HCT116 (cell line): ENCODE measurements at regions of chr5 and their contacts with region 1.

Region 1: DNA sequence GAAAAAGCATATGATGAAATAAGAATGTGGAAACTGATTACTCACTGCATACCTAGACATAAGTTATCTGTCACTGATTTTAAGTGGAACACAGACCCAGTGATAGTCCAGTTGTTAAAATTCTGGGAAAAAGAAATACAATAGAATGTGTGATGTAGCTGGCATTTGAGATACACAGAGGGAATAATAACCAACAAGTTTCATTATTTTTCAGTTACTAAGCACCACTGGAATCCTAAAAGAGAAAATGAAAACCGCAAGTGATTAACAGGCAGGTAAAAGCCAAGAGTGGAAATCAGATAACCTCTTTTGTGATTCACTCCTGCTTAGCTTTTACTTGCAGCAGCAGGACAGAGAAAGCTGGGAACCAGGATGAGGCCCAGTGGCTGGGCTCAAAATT is 994.0 kb upstream of the SEMA6A start:
- DNase-seq: no peak
- ATAC-seq: no peak
- H3K4me3 ChIP-seq: no peak overlapping the region
- H3K27ac ChIP-seq: no peak overlapping the region
- H3K4me1 ChIP-seq: no peaks in the 10 kb centered on the region
- H3K27me3 ChIP-seq: no peaks in the 10 kb centered on the region
- CTCF ChIP-seq: no peak
- POLR2A ChIP-seq: no peak
- RAD21 ChIP-seq: no peak

Region 2: GRCh38 chr5:116574367-116575325 is 994.0 kb before region 1 on chr5 and contains the start of gene SEMA6A:
- CTCF ChIA-PET with region 1: no interaction called
- POLR2A ChIA-PET with region 1: no interaction called
- RAD21 ChIA-PET with region 1: no interaction called
- intact Hi-C with region 1: loop called (anchors 10 kb)
- DNase-seq: peak; percentile 95
- ATAC-seq: peak; percentile 87
- H3K4me3 ChIP-seq: peak within 1 kb of the TSS; percentile 59 to 70
- H3K27ac ChIP-seq: peak within 1 kb of the TSS; percentile 40
- H3K4me1 ChIP-seq: peaks cover 8 to 21% of the 10 kb centered on the region in 2 experiments; a peak in 3 of 4 replicates
- H3K27me3 ChIP-seq: no peaks in the 10 kb centered on the region
- CTCF ChIP-seq: no peak
- POLR2A ChIP-seq: peak; percentile 48
- RAD21 ChIP-seq: peak; percentile 44
- total RNA-seq, gene SEMA6A: 6.7 TPM

Region 3: GRCh38 chr5:117587111-117587510 is 18.5 kb after region 1 on chr5:
- CTCF ChIA-PET with region 1: no interaction called
- POLR2A ChIA-PET with region 1: no interaction called
- RAD21 ChIA-PET with region 1: no interaction called
- intact Hi-C with region 1: no loop called
- DNase-seq: no peak
- ATAC-seq: no peak
- H3K4me3 ChIP-seq: no peak overlapping the region
- H3K27ac ChIP-seq: no peak overlapping the region
- H3K4me1 ChIP-seq: no peaks in the 10 kb centered on the region
- H3K27me3 ChIP-seq: no peaks in the 10 kb centered on the region
- CTCF ChIP-seq: no peak
- POLR2A ChIP-seq: no peak
- RAD21 ChIP-seq: no peak

Region 4: GRCh38 chr5:117792476-117792875 is 223.9 kb after region 1 on chr5:
- CTCF ChIA-PET with region 1: no interaction called
- POLR2A ChIA-PET with region 1: no interaction called
- RAD21 ChIA-PET with region 1: no interaction called
- intact Hi-C with region 1: no loop called
- DNase-seq: no peak
- ATAC-seq: no peak
- H3K4me3 ChIP-seq: no peak overlapping the region
- H3K27ac ChIP-seq: no peak overlapping the region
- H3K4me1 ChIP-seq: no peaks in the 10 kb centered on the region
- H3K27me3 ChIP-seq: no peaks in the 10 kb centered on the region
- CTCF ChIP-seq: no peak
- POLR2A ChIP-seq: no peak
- RAD21 ChIP-seq: no peak

Region 5: DNA sequence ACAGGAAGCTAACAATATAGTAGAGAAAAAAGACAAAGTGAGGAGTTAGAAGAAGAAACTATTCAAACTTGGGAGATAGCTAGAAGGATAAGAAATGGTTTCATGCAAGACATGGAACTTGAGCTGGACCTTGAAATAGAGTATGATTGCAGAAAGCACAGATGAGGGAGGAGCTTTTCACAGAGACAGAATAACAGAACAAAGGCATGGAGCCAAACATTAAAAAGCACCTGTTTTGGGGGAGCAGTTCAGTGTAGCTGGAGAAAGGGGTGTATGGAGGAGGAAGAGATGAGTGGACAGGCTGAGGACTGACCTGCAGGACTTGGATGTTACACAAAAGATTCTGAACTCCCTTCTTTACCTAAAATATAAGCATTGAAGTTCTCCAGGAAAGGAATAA is 1394.5 kb after region 1 on chr5:
- CTCF ChIA-PET with region 1: no interaction called
- POLR2A ChIA-PET with region 1: no interaction called
- RAD21 ChIA-PET with region 1: no interaction called
- intact Hi-C with region 1: no loop called
- DNase-seq: no peak
- ATAC-seq: no peak
- H3K4me3 ChIP-seq: no peak overlapping the region
- H3K27ac ChIP-seq: no peak overlapping the region
- H3K4me1 ChIP-seq: no peaks in the 10 kb centered on the region
- H3K27me3 ChIP-seq: no peaks in the 10 kb centered on the region
- CTCF ChIP-seq: no peak
- POLR2A ChIP-seq: no peak
- RAD21 ChIP-seq: no peak